HCT116 (cell line): ENCODE measurements at regions of chr9 and their contacts with region 1.

Region 1: DNA sequence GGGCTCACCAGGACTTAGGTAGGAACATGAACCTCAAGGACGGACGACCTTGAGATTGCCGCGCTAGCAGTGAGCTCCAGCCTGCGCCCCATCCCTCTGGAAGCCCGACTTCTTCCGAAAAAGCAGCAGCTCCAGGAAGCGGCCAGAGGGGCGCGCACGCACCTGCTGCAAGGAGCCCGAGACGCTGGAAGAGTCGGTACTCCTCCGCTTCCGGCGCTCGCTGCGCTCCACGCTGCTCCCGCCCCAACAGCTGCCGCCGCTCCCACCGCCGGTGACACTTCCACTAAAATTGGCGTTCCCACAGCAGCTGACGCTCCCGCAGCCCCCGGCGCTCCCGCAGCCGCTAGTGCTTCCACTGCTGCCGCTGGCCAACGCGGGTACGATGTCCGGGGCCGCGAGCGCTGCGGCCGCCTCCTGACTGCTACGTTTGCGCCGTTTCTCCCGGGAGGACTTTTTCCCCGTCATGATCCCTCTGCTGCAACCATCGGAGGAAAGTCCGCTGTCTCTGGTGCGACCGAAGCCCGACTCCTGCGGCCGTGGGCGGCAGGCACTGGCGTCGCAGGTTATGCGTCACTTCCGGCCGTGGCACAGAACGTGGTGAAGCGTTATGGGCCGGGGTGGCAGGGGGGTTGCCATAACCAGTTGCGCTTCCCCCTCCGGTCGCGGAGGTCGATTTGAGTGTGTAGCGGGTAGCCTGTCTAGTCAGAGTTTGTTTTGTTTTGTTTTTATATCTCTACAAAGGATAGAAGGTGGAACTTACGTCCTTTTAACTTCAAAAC is at the start of gene CAAP1:
- DNase-seq: peak; percentile 84
- ATAC-seq: peak; percentile 92
- H3K4me3 ChIP-seq: peak within 1 kb of the TSS; percentile 77 to 91
- H3K27ac ChIP-seq: peak within 1 kb of the TSS; percentile 97
- H3K4me1 ChIP-seq: peaks cover 5 to 14% of the 10 kb centered on the region in 2 experiments; a peak in 3 of 4 replicates
- H3K27me3 ChIP-seq: no peaks in the 10 kb centered on the region
- CTCF ChIP-seq: peak in 2 of 3 experiments; percentile 21 to 25; a peak in 4 of 6 replicates
- POLR2A ChIP-seq: peak; percentile 92
- RAD21 ChIP-seq: peak; percentile 40; the same call in 1 of the 2 replicates
- total RNA-seq, gene CAAP1: 19.1 TPM

Region 2: DNA sequence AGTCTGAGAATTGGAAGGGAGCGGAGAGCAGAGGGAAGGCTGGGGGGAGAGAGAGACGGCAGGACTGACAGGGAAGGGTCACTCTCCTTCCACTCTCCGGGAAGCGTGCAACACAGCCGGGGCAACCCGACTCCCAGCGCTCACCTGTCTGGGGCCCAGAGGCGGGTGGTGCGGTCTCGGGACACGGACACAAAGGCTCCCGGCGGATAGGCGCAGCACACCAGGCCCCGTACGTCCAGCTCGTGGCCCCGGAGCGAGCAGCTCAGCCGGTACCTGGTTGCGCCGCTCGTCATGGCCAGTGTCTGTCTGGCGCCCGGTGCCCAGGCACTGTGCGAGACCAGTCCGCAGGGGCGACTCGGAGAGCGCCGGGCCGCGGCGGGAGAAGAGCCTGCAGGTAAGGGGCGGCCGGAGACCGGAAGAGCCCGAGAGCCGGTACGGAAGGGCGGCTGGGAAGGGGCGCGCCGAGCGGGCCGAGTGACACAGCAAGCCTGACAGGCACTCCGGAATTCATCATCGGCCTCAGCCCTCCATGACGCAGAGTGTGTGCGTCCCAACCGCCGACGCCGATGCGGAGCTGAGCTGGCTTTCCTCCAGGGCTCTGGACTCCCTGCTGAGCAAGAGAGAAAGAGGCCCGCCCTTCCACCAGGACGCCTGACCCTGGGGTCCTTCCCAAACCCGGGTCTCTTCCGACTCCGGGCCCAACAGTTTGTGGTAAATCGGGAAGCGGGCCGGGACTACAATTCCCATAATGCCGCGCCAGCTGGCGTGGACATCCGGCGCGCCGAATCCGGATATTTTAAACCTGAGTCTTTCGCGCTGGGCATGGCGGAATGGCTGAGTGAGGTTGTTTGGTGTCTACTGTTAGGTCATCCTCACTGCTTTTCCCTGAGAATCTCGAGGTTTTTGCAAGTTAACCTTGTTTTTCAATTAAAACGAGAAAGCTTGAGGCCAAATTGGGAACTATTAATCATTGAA is 54.6 kb after region 1 on chr9 and contains the start of gene PLAA:
- CTCF ChIA-PET with region 1: no interaction called
- POLR2A ChIA-PET with region 1: interaction called, 10 read pairs
- RAD21 ChIA-PET with region 1: no interaction called
- intact Hi-C with region 1: loop called (anchors 1 kb)
- DNase-seq: peak; percentile 85
- ATAC-seq: peak; percentile 92
- H3K4me3 ChIP-seq: peak within 1 kb of the TSS; percentile 95 to 97
- H3K27ac ChIP-seq: peak within 1 kb of the TSS; percentile 84
- H3K4me1 ChIP-seq: peaks cover 15 to 39% of the 10 kb centered on the region in 2 experiments; a peak in 3 of 4 replicates
- H3K27me3 ChIP-seq: no peaks in the 10 kb centered on the region
- CTCF ChIP-seq: peak in 1 of 3 experiments; percentile 11; a peak in 1 of 6 replicates
- POLR2A ChIP-seq: peak; percentile 49
- RAD21 ChIP-seq: no peak
- total RNA-seq, gene PLAA: 41.2 TPM